ENCODE measurements at regions of chr5 and their contacts with region 1.

Region 1: DNA sequence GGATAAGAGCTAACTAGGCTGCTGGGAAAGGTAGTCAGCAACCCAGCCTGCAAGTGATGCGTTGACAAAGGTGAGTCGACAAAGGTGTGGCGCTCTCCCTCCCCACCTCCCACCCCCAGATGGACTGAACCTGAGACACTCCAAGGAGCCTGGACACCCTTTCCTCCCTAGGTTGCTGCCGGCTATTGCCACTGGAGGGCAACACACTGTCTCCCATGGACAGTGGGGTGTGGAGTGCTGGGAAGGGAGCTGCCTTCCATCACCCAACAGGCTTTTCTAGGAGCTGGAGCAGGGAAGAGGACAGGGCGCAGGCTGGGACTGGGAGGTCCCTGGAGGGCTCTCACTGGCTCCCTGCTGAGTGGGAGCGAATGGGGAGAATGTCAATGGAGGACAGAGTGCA is 75.4 kb upstream of the ARAP3 start:
- DNase-seq: peak in 1 of 2 experiments; percentile 29
- H3K4me3 ChIP-seq: no peak overlapping the region
- H3K27ac ChIP-seq: no peak overlapping the region
- H3K4me1 ChIP-seq: peaks cover 17 to 30% (median 26%) of the 10 kb centered on the region in 4 experiments
- H3K27me3 ChIP-seq: peaks cover 9 to 22% (median 18%) of the 10 kb centered on the region in 4 experiments
- CTCF ChIP-seq: peak in 2 of 3 experiments; percentile 78 to 79; a peak in 3 of 4 replicates
- EP300 ChIP-seq: no peak
- POLR2A ChIP-seq: no peak
- RAD21 ChIP-seq: peak; percentile 76 to 86

Region 2: DNA sequence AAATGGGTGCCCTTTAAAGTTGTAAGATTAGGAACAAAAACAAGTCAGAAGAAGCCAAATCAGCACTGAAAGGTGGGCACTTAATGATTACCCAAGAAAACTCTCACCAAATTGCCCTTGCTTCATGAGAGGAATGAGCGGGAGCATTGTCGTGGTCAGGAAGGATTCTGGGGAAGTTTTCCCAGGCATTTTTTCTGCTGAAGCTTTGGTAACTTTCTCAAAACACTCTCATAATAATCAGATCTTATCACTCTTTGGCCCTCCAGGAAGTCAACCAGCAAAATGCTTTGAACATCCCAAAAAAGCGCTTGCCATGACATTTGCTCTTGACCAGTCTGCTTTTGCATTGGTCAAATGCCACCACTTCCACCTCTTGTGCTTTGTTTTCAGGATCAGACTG is 292.1 kb before region 1 on chr5:
- CTCF ChIA-PET with region 1: no interaction called
- POLR2A ChIA-PET with region 1: no interaction called
- DNase-seq: no peak
- H3K4me3 ChIP-seq: no peak overlapping the region
- H3K27ac ChIP-seq: no peak overlapping the region
- H3K4me1 ChIP-seq: no peaks in the 10 kb centered on the region
- H3K27me3 ChIP-seq: no peaks in the 10 kb centered on the region
- CTCF ChIP-seq: no peak
- EP300 ChIP-seq: no peak
- POLR2A ChIP-seq: no peak
- RAD21 ChIP-seq: no peak

Region 3: DNA sequence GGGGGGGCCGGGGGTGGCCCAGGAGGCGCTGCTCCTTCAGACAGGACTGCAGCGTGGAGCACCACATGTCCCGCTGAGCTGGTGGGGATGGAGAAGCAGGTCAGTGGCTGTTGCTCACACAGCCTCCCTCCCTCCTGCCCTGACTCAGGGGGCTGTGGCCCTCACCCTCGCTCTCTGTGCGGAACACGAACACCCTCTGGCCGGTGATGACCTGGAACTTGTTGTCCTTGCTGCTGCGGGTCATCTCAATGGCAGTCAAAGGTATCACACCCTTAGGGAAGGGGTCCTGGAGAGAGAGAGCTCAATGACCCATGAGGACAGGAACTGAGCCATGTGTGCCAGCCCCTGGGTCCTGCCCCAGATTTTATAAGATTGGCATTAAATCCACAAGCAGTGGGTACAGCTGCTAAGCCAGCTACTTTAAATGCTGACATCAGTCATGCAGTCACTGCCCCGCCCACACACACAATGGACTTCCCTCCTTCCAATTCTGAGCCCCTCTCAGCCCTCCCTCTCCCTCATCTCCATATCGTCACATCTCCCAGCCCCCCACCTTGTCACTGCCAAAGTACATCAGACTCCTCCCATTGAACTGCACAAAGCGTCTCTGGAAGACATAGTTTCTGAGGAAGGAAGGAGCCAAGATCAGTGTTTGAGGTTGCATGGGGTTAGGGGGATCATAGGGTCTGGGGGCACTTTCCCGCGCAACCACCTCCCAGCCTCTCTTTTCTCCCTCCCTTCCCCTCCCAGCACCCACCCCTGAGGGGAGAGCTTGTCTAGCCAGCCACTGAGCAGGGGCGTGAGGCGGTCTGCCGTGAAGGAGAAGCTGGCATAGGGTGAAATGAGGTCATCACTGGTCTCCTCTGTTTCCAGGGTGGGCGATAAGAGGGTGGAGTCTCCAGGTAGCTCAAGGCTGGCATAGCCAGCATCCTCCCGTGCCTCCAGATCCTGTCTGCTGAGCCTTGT is 84.3 kb before region 1 on chr5:
- CTCF ChIA-PET with region 1: interaction called, 13 read pairs
- POLR2A ChIA-PET with region 1: no interaction called
- DNase-seq: no peak
- H3K4me3 ChIP-seq: no peak overlapping the region
- H3K27ac ChIP-seq: no peak overlapping the region; the same call in 1 of the 2 replicates
- H3K4me1 ChIP-seq: peaks cover 2 to 13% (median 8%) of the 10 kb centered on the region in 4 experiments; a peak in 5 of 7 replicates
- H3K27me3 ChIP-seq: no peaks in the 10 kb centered on the region
- CTCF ChIP-seq: no peak
- EP300 ChIP-seq: no peak
- POLR2A ChIP-seq: no peak
- RAD21 ChIP-seq: no peak

Region 4: GRCh38 chr5:141734501-141735230 is 22.7 kb before region 1 on chr5:
- CTCF ChIA-PET with region 1: interaction called, 20 read pairs
- POLR2A ChIA-PET with region 1: interaction called, 4 read pairs
- DNase-seq: peak in 1 of 2 experiments; percentile 87
- H3K4me3 ChIP-seq: no peak overlapping the region
- H3K27ac ChIP-seq: no peak overlapping the region
- H3K4me1 ChIP-seq: peaks cover 1 to 15% (median 7%) of the 10 kb centered on the region in 4 experiments; a peak in 5 of 7 replicates
- H3K27me3 ChIP-seq: no peaks in the 10 kb centered on the region
- CTCF ChIP-seq: no peak
- EP300 ChIP-seq: no peak
- POLR2A ChIP-seq: no peak
- RAD21 ChIP-seq: 0 out of 4 replicates have a peak, but pooled peaks have one; percentile 4 to 17

Region 5: GRCh38 chr5:141778206-141778605 is 20.8 kb after region 1 on chr5:
- CTCF ChIA-PET with region 1: interaction called, 54 read pairs
- POLR2A ChIA-PET with region 1: interaction called, 11 read pairs
- DNase-seq: no peak
- H3K4me3 ChIP-seq: no peak overlapping the region
- H3K27ac ChIP-seq: no peak overlapping the region
- H3K4me1 ChIP-seq: peaks cover 0 to 10% (median 6%) of the 10 kb centered on the region in 4 experiments; a peak in 6 of 7 replicates
- H3K27me3 ChIP-seq: no peaks in the 10 kb centered on the region
- CTCF ChIP-seq: no peak
- EP300 ChIP-seq: no peak
- POLR2A ChIP-seq: no peak
- RAD21 ChIP-seq: no peak

Region 6: DNA sequence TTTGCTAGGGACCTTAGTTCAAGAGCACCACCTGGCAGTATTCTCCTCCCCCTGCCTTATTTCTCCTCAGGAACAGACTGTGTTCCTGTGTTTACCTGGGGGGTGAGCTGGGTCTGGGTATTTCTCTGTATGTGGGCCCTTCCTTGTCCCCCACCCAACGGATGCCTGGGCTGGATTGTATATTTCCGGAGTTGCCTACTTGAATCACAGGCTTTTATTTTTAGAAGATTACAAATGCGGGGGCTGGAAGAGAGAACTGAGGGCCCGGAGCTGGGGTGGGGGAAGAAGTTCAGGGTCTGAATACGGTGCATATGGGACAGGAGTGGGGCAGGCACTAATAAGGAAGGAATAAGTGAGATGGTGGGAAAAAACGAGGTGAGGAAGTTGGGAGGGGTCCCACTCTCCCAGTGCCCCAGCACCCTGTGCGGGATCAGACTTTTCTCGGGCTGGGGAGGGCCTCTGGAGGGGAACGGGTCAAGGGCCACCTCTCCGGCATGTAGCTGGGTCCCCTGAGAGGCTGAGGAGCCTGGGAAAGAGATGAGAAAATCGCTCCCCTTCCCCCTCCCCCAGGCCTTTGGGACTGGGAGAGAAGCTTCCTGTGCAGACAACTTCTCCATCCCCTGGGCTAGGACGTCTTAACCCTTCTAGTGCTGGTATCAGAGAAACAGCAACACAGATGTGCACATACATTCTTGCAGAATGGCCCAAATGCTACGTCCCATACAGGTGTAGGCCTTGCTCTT is 78.7 kb after region 1 on chr5:
- CTCF ChIA-PET with region 1: interaction called, 10 read pairs
- POLR2A ChIA-PET with region 1: interaction called, 3 read pairs
- DNase-seq: no peak
- H3K4me3 ChIP-seq: no peak overlapping the region
- H3K27ac ChIP-seq: 0 out of 2 replicates have a peak overlapping the region, but pooled peaks have one; percentile 14
- H3K4me1 ChIP-seq: peaks cover 31 to 46% (median 43%) of the 10 kb centered on the region in 4 experiments
- H3K27me3 ChIP-seq: no peaks in the 10 kb centered on the region
- CTCF ChIP-seq: no peak
- EP300 ChIP-seq: no peak
- POLR2A ChIP-seq: no peak
- RAD21 ChIP-seq: no peak

Measured in H1 (cell line).